Head of caudate nucleus (tissue), 42 donors: ENCODE measurements at regions of chr1 and their contacts with region 1.

Region 1: DNA sequence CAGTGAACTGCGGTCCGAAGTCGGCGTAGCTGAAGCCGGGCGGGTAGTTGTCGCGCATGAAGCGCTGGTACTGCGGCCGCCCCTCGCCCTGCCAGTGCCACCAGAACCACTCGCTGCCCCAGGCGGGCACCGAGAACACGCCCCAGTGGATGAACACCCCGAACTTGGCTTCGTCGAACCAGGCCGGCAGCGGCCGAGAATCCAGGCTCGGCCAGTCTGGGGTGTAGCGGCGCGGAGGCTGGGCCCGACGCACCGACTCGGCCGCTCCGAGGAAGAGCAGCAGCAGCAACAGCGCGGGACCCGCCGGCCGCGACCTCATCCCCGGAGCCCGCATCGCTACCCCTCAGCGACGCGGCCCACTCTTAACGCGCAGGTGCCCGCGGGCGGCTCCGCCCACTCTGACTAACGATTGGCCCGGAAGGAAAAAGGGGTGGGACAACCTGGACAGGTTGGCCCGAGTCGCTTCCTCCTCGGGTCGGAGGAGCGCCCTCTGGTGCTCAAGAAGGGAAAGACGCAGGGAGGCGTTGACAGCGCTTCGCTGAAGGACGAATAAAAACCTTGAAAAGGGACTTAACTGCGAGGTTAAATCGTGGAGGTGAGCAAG is at the start of gene FUCA1:
- DNase-seq: peak; percentile 88 to 97 (median 95)

Region 2: DNA sequence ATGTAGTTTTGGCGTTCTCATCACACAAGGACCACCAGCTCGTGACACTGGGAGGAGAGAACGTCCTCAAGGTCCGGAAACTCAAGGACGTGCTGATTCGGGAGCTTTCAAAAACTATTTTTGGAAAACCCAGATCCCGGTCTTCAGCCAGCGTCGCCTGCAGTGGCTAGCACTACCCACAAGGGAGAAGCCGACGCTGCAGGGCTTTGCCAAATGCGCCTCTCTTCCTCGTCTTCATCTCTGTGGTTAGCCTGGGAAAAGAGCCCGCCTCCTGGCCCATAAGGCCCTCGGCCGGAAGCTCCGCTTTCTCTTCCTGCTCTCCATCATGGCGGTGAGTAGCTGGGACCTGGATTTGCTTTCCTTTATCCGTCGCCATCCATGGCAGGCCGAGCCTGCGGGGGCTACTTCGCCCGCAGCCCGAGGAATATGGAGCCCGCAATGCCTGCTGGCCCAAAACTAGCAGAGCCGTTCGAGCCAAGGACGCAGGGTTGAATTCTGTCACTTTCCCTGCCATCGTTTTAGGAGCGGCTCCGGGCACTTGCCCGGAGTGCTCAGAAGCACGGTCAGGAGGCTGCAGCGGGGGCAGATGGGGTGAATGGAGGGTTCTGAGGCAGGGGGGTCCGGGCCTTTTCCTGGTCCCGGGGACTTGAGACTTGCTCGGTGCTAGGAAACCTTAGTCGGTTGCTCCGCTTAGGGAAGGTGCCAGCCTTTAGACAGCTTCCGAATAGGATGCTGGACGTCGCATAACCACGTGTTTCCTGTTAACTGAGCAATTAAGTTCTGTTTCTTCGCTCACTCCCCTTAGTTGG is 176.4 kb before region 1 on chr1 and contains the start of gene RPL11:
- intact Hi-C with region 1: no loop called
- DNase-seq: peak; percentile 88 to 98 (median 95)

Region 3: GRCh38 chr1:23727362-23727827 is 140.7 kb before region 1 on chr1:
- intact Hi-C with region 1: no loop called
- DNase-seq: peak in 33 of 42 donors; percentile 5 to 67 (median 34)

Region 4: DNA sequence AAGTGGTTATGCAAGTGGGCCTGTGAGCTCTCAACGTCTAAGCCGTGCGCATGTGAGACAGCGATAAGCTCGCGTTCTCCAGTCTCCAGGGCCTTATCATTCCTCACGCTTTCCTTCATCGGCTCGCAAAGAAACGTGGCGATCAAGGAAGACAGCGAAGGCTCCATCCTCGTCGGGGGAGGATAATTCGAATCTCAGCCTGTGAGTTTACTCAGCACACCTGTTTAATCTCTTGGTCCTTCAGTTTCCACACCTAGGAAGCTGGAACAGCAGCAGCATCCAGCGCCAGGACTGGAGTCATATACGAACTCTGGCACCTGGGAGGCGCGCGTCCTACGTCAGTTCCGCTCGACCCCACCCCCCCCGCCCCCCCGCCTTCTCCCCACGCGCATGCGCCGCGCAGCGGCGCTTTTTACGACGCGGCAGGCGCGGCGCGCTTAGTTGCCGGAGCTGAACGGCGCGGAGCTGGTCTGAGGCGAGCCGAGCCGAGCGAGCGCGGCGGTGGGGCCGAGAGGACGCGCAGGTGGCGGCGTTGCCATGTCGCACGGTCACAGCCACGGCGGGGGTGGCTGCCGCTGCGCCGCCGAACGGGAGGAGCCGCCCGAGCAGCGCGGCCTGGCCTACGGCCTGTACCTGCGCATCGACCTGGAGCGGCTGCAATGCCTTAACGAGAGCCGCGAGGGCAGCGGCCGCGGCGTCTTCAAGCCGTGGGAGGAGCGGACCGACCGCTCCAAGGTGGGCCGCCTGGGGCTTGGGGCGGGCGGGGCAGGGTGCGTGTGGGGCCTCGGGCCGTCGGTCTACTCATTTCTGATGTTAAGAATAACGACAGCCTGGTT is 89.9 kb before region 1 on chr1 and contains the start of gene PITHD1:
- intact Hi-C with region 1: loop called (anchors 10 kb)
- DNase-seq: peak; percentile 62 to 90 (median 78)

Region 5: GRCh38 chr1:23825076-23825761 is 42.8 kb before region 1 on chr1 and contains the start of gene HMGCL:
- intact Hi-C with region 1: loop called (anchors 5 kb)
- DNase-seq: peak; percentile 83 to 97 (median 93)

Region 6: GRCh38 chr1:23959041-23959460 is 91.0 kb after region 1 on chr1:
- intact Hi-C with region 1: no loop called
- DNase-seq: peak in 41 of 42 donors; percentile 24 to 76 (median 56)

Region 7: GRCh38 chr1:23979878-23980724 is 112.0 kb after region 1 on chr1 and contains the start of gene SRSF10:
- intact Hi-C with region 1: no loop called
- DNase-seq: peak; percentile 96 to 99 (median 98)